ENCODE measurements at regions of chr11 and their contacts with region 1.

Region 1: DNA sequence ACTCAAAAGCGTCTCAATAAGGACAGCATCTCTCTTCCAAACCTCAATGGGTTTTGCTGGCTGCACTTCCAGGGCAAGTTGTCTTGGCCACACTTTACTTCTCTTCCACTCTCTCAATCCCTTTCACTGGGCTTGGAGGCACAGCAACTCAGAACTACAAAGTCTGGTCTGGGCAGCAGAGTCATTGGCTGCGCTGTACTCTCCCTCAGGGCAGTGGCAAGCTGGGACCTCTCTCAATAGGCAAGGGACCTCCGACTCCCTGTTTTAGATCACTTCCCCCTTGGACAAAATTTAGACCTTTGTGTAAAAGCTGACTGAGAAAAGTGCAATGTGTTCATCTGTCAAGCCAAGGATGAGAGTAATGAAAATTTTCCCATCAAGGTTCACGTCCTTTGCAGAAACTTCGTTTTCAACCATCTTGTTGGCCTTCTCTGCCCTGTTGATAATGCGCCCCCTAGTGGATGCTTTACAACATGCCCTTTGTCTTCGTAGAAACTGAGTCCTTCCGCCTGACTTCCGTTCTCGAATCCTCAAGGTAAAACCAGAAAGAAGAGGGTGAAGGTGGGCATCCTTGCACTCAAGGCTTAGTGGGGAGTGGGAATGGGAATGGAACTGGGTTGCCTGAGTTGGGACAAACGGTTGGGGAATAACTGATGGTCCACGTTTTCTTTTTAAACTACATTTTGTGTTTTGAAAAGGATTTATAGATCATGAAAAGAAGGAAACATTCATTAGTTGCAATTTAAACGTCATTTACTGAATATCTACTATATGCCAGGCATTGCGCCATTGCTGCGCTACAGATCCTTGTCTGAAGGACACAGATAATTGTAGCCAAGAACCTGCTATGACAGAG is 99.1 kb downstream of the CD44 start:
- DNase-seq: peak; percentile 16 to 33
- ATAC-seq: peak in 1 of 2 donors; percentile 58
- H3K4me3 ChIP-seq: no peak overlapping the region
- H3K27ac ChIP-seq: no peak overlapping the region
- H3K4me1 ChIP-seq: peaks cover 0 to 3% of the 10 kb centered on the region in 2 donors
- H3K27me3 ChIP-seq: no peaks in the 10 kb centered on the region
- CTCF ChIP-seq: peak; percentile 61 to 84 (median 77)
- POLR2A ChIP-seq: no peak

Region 2: DNA sequence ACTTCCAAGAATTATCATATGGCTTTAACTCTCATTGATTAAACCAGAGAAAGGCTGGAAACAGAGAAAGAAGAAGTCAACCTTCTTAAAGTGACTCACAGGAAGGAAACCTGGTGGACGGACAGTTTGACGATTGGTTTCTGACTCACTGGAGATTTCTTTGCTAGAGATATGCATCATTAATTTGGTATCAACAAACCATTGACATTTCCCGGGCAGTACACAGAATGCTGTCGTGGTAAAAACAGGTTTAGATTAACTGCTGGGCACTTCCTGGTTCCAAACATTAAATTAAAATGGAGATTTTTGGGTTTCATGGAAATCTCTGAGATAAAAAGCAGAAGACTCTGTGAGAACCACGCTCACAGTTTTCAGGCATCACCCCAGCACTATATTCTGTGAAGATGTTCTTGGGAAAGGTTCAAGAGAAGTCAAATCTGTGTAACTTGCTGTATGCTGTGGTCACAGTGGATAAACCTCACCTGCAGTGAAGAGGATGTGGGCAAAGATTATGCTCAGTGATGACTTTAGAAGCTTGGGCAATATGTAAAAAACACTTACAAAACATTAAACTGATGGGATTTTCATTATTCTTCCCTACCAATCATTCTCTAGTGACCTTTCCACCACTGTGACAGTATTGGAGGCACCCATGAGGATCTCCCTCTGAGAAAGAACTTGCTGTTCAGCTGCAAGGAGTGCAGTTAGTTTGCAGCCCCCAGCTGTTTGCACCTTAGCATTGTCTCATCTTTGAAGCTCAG is 160.2 kb before region 1 on chr11:
- in situ Hi-C with region 1: no loop called
- intact Hi-C with region 1: no loop called
- DNase-seq: no peak
- ATAC-seq: no peak
- H3K4me3 ChIP-seq: no peak overlapping the region
- H3K27ac ChIP-seq: no peak overlapping the region
- H3K4me1 ChIP-seq: peaks cover under 1 to 8% of the 10 kb centered on the region in 2 donors
- H3K27me3 ChIP-seq: no peaks in the 10 kb centered on the region
- CTCF ChIP-seq: no peak
- POLR2A ChIP-seq: no peak

Region 3: GRCh38 chr11:35288817-35289541 is 50.9 kb after region 1 on chr11:
- in situ Hi-C with region 1: no loop called
- intact Hi-C with region 1: no loop called
- DNase-seq: no peak
- ATAC-seq: no peak
- H3K4me3 ChIP-seq: no peak overlapping the region
- H3K27ac ChIP-seq: no peak overlapping the region
- H3K4me1 ChIP-seq: no peaks in the 10 kb centered on the region
- H3K27me3 ChIP-seq: no peaks in the 10 kb centered on the region
- CTCF ChIP-seq: no peak
- POLR2A ChIP-seq: no peak

Region 4: DNA sequence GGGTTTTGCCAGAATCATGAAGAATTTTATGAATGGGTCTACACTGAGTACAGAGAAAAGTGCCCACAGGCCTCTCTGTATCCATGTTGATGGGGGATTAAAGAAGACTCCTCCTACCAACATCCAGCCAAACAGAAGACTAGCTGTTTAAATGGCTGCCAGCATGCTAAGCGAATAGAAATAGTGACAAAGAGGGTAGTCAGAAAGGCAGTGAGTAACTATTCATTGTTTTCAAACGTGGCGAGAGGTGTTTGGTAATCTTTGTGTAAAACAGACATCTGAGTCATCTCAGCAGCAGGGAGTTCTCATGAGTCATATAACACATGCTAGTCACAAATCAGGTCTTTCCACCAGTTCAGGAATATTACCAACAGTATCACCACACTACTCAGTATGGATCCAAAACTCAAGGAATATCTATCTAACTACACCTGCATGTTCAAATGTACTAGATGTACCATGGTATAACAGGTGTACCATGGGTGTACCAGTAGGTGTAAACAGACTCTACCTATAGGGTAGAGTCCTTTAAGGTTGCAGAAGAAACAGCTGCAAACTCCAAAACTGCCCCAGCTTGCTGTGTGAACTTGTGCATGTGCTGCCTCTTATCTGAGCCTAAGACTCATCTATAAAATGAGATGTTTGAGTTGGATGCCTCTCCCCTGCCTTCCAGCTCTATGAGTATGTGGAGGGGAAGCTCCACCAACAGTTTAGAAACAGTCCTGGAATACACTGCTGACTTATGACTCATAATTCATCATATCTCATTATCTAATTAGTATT is 99.2 kb after region 1 on chr11:
- in situ Hi-C with region 1: no loop called
- intact Hi-C with region 1: no loop called
- DNase-seq: no peak
- ATAC-seq: peak; percentile 91 to 92
- H3K4me3 ChIP-seq: no peak overlapping the region
- H3K27ac ChIP-seq: peak overlapping the region in 3 of 4 donors; percentile 31 to 68 (median 59)
- H3K4me1 ChIP-seq: peaks cover 0 to 13% of the 10 kb centered on the region in 2 donors
- H3K27me3 ChIP-seq: no peaks in the 10 kb centered on the region
- CTCF ChIP-seq: no peak
- POLR2A ChIP-seq: no peak

Region 5: DNA sequence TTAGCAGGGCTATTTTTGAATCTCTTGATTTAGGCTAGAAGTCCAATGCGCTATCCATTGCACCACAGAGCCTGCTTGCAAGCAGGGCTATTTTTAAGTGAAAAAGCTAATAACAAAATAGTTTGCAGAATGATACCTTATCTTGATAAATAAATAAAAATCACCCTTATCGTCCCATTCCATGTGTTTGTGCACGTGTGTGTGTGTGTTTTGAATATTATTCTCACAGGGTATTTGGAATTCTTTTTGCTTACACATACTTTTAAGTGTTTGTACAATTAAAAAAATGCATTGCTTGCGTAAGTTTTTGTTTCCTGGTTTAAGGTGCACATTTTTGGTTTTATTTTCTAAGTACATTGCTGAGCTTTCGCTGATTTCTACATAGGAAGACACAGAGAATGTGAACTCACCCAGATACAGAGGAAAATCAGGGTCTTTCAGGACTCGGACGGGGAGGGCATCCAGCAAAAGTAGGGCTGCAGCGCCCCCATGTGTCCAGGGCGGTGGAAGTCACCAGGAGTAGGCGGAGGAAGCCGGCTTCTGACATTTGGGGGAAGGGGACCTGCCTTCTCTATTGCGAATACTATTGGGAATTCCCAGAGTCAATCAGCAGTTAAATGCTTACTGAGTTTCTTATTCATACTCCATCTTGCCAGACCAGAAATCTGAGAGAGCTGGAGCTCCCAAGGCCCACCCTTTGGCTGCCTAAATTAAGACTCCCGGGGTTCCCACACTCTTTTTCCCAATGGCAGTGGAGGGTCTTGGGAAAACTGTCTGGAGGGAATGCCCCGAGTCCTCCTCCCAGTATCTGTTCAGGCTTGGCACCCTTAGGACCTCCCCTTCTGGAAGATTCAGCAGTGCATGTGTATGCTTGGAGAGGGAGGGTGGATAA is 154.1 kb after region 1 on chr11:
- in situ Hi-C with region 1: loop called in 1 of 4 experiments (anchors 10 kb)
- intact Hi-C with region 1: loop called (anchors 5 kb)
- DNase-seq: peak; percentile 26 to 52
- ATAC-seq: peak; percentile 61 to 65
- H3K4me3 ChIP-seq: peak overlapping the region in 1 of 4 donors; percentile 29
- H3K27ac ChIP-seq: no peak overlapping the region
- H3K4me1 ChIP-seq: peaks cover 3 to 4% of the 10 kb centered on the region in 2 donors
- H3K27me3 ChIP-seq: no peaks in the 10 kb centered on the region
- CTCF ChIP-seq: peak; percentile 80 to 88 (median 83)
- POLR2A ChIP-seq: no peak

Measured in gastrocnemius medialis (tissue), 4 donors.